ENCODE measurements at regions of chr9 and their contacts with region 1.

Region 1: DNA sequence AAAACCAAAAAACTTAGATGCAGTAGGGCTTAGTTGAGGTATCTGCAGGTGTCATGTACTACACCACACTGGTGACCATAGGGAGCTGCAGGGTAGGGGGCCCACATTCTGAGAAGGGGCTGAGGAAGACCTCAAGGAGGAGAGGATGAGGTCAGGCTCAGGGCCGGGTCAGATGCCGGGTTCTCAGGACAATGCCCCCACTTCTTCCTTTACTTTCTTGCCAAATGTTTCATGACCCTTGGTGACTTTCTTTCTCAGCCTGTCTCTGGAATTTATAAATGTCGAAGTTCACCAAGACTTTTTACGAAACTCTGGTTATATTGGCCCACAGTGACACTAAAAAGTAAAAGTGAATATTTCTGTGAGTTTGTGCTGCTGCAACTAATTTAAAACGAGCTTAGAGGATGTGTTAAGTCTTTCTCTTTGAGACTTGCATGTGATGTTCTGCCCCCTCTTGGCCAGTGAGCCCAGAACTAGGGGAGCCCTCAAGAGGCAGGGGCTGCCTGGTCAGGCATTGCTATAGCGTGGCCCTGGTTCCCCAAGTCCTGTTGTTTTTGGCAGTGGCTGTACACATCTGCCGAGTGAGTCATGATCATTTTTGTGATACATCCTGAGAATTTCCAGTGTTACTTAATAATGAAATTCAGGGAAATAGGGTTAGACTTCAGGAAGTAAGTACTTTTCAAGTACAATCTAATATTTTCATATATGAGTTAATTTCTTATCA is 11.2 kb downstream of the ACO1 start:
- DNase-seq: peak; percentile 45 to 50
- ATAC-seq: peak; percentile 83 to 96 (median 90)
- H3K4me3 ChIP-seq: no peak overlapping the region
- H3K27ac ChIP-seq: peak overlapping the region in 6 of 10 donors; percentile 37 to 81 (median 52)
- H3K4me1 ChIP-seq: peaks cover 0 to 45% (median 13%) of the 10 kb centered on the region in 9 donors
- H3K27me3 ChIP-seq: no peaks in the 10 kb centered on the region
- CTCF ChIP-seq: peak in 5 of 9 donors; percentile 14 to 44 (median 36)

Region 2: DNA sequence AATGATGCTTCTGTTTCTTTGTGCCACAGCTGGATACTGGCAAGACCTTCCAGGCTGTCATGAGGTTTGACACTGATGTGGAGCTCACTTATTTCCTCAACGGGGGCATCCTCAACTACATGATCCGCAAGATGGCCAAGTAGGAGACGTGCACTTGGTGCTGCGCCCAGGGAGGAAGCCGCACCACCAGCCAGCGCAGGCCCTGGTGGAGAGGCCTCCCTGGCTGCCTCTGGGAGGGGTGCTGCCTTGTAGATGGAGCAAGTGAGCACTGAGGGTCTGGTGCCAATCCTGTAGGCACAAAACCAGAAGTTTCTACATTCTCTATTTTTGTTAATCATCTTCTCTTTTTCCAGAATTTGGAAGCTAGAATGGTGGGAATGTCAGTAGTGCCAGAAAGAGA is 54.3 kb after region 1 on chr9:
- intact Hi-C with region 1: loop called in 3 of 10 experiments (anchors 5 to 10 kb)
- DNase-seq: no peak
- ATAC-seq: no peak
- H3K4me3 ChIP-seq: no peak overlapping the region
- H3K27ac ChIP-seq: no peak overlapping the region
- H3K4me1 ChIP-seq: no peaks in the 10 kb centered on the region
- H3K27me3 ChIP-seq: no peaks in the 10 kb centered on the region
- CTCF ChIP-seq: no peak

Region 3: DNA sequence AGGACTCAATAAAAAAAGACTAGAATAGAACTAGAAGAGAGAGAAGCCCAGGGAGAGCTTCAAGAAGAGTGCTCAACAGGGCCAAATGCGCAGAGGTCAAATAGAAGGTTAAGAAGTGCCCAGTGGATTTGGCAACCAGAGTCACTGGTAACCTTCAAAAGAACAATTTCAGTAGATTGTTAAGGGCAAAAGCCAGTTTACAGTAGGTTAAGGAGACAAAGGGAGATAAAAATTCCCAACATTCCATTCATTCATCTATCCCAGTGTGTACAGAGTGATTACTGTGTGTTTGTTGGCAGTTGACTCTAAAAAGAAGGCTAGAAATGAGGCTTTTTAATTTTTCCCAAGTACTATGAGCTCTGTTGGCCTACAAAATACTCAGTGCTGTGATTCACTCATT is 60.9 kb after region 1 on chr9:
- intact Hi-C with region 1: loop called in 2 of 10 experiments (anchors 10 kb)
- DNase-seq: no peak
- ATAC-seq: peak in 2 of 8 donors; percentile 18 to 37
- H3K4me3 ChIP-seq: no peak overlapping the region
- H3K27ac ChIP-seq: no peak overlapping the region
- H3K4me1 ChIP-seq: peaks cover 0 to 8% (median 0%) of the 10 kb centered on the region in 9 donors
- H3K27me3 ChIP-seq: no peaks in the 10 kb centered on the region
- CTCF ChIP-seq: no peak